HAP-1 (cell line): ENCODE measurements at regions of chr9 and their contacts with region 1.

Region 1: DNA sequence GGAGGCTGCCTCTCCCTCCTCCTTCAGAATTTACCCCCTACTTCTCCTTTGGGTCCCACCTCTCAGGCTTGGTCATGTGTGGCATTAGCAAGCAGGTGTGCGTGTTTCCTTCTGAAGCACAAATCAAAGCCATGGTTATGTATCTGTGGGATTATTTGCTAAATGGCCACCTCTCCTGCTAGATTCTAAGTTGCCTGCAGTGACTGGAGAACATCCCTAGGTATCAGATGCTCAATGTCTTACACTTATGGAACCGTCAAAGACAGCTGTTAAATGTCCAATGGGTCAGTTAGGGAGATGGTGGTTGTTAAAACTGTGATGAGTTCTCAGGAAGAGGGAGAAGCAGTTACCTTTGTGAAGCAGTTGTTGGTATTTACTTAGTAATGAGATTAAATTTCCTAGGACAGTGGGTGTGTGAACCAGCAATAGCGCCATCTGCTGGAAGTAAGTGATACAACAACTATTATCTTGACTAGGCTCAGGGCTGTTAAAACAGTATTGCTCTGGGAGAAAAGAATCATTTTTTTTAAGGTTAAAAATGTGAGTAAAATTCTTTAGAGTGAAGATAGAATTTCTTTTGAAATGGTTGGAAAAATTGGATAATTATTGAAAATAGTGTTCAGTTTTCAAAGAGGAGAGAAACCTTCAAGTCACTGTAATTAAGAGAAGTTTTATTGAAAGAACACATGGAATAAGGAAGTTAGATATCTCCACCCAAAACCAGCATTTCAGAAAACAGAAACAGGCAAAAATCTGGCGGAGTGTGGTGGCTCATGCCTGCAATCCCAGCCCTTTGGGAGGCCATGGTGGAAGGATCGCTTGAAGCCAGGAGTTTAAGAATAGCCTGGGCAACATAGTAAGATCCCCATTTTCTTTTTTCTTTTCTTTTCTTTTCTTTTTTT is 71.3 kb downstream of the TMC1 start:
- DNase-seq: peak; percentile 46 to 80
- H3K4me3 ChIP-seq: no peak overlapping the region
- H3K4me1 ChIP-seq: peaks cover 43% of the 10 kb centered on the region
- H3K27me3 ChIP-seq: no peaks in the 10 kb centered on the region

Region 2: GRCh38 chr9:72280913-72281500 is 311.7 kb before region 1 on chr9:
- in situ Hi-C with region 1: loop called (anchors 5 kb)
- DNase-seq: peak; percentile 80 to 85
- H3K4me3 ChIP-seq: no peak overlapping the region
- H3K4me1 ChIP-seq: peaks cover 3% of the 10 kb centered on the region; the same call in 1 of the 2 replicates
- H3K27me3 ChIP-seq: no peaks in the 10 kb centered on the region

Region 3: GRCh38 chr9:72364679-72365524 is 227.9 kb before region 1 on chr9 and contains the start of gene ZFAND5:
- in situ Hi-C with region 1: loop called (anchors 10 kb)
- DNase-seq: peak; percentile 99
- H3K4me3 ChIP-seq: peak within 1 kb of the TSS; percentile 70
- H3K4me1 ChIP-seq: peaks cover 31% of the 10 kb centered on the region
- H3K27me3 ChIP-seq: no peaks in the 10 kb centered on the region

Region 4: GRCh38 chr9:72509635-72510034 is 83.1 kb before region 1 on chr9:
- in situ Hi-C with region 1: loop called (anchors 10 kb)
- DNase-seq: no peak
- H3K4me3 ChIP-seq: no peak overlapping the region
- H3K4me1 ChIP-seq: peaks cover 24% of the 10 kb centered on the region
- H3K27me3 ChIP-seq: no peaks in the 10 kb centered on the region

Region 5: DNA sequence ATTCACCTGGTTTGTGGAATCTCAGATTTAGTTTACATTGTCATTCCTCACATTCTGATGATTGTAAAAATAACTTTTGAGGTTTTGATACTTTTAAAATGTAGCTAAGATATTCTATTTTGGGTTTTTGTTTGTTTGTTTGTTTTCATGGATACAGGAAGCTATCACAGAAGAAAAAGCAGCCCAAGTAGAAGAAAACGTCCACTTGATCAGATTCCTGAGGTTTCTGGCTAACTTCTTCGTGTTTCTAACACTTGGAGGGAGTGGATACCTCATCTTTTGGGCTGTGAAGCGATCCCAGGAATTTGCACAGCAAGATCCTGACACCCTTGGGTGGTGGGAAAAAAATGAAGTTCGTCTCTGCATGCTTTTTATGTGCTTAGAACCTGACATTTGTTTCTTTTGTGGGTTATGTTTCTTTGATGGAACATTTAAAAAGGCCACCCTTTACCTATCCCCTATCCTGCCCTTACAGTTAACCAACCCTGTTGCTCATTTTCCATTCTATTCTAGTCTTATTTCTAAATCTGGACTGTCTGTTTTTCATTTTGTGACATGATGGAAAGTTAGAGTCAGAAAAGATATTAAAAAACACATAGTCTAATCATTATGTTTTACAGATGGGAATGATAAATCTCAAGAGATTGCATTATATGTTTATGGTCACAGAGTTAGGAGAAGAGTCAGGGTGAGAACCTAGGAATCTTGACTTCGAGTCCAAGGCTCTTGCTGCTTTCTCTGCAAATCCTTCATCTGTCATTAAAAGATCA is 196.4 kb after region 1 on chr9:
- in situ Hi-C with region 1: no loop called
- DNase-seq: no peak
- H3K4me3 ChIP-seq: no peak overlapping the region
- H3K4me1 ChIP-seq: peaks cover 3% of the 10 kb centered on the region
- H3K27me3 ChIP-seq: no peaks in the 10 kb centered on the region

Region 6: DNA sequence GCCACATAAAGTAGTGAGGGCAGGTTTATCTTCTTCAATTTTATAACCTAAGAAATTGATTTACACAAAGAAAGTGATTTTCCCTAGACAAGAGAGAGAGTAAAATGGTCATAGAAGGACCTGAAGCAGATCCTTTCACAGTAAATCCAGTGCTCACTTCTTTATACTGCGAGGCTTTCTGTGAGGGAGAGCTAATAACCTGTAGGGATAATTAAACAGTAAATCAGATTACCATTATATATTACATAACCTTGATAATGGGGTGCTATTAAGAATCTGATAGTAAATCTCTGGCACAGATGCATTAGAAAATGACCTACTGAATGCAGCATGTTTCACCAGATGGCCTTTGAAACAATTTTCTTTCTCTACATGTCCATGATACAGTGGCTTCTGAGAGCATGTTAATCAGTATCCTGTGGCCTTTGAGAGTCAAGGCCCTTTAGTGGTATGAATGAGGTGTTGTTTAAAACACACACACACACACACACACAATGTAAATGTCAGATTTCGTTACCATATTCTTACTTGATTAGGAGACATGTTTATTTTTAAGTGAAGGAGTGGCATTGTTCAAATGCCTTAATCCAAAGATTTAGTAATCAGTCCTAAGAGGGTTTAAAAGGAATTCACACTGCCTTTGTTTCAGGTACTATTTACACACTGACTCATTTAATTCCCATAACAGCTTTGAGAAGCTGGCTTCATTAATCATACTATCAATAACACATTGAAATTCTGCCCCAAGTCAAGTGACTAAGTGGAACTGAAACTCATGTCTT is 235.4 kb after region 1 on chr9:
- in situ Hi-C with region 1: loop called (anchors 10 kb)
- DNase-seq: peak; percentile 28 to 92
- H3K4me3 ChIP-seq: no peak overlapping the region
- H3K4me1 ChIP-seq: peaks cover 32% of the 10 kb centered on the region
- H3K27me3 ChIP-seq: no peaks in the 10 kb centered on the region

Region 7: DNA sequence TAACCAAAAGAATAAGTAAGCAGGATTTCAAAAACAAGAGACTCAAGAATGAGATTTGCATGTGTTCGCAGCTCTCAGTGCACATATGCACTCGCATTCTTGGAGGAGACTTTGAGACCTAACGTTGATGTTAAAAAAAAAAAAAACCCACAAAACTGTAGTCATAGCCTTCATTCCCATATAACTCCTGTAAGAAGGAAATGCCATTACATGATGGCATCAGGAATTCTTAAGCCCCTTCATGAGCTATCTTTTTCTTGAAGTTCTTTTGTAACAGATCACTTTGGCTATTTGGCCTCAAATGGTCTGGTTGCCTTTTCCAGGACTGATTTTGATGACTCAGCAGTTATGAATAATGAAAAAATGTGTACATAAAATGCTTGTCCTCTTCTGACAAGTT is 246.3 kb after region 1 on chr9:
- in situ Hi-C with region 1: no loop called
- DNase-seq: peak in 1 of 2 experiments; percentile 6
- H3K4me3 ChIP-seq: no peak overlapping the region
- H3K4me1 ChIP-seq: peaks cover 22% of the 10 kb centered on the region
- H3K27me3 ChIP-seq: no peaks in the 10 kb centered on the region